Activated T-helper 1 cell treated with anti-CD3 and anti-CD28 coated beads, Interleukin-12 subunit alpha, Interleukin-12 subunit beta, Interleukin-2, Interleukin-4 antibody, amounts not matched to agents 30 ng/mL and 10 ng/mL and 1 ng/mL, durations not matched to agents 14 hours and 24 hours and 36 hours (primary cell): ENCODE measurements at regions of chr9 and their contacts with region 1.

Region 1: GRCh38 chr9:68949271-68950000 is 64.5 kb downstream of the PRKACG start:
- DNase-seq: no peak
- H3K4me3 Mint-ChIP-seq: peak overlapping the region; percentile 62
- H3K27ac Mint-ChIP-seq: peak overlapping the region; percentile 69
- H3K4me1 Mint-ChIP-seq: peaks cover 76% of the 10 kb centered on the region
- H3K27me3 Mint-ChIP-seq: no peaks in the 10 kb centered on the region

Region 2: DNA sequence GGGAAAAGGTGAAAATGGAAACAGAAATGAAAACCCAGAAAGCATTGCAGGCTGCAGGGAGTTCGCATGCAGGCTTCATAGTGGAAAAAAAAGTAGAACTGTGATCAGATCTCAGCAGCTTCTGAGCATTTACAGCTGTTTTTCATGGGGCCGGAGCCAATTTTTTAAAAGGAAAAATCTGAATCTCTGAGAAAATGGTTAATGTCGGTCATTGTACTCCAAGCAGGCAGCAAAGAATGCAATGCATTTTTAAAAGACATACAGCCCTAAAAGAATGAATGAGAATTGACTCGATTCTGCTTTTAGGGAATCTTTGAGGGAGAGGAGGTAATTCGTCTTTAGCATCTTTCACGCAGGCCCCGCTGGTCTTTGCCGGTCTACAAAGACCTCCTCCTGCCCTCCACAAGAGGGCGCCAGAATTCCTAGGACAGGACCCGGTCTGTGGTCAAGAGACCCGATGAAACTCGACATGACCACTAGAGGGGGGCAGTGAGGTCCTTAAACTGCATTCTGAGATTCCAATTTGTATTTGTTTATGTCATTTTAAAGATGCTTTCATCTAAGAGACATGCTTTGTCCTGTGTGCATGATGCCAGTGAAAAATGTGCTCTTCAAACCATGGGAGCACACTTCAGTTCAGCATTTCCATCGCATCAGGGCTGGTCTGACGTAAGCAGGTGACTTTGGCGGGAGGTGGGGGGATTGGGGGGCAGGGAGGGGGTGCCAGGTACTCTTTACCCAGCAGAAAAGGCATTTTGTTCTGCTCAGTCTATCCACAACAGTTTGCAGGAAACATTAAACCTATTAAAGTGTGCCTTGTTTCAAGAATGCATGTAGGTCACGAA is 365.0 kb before region 1 on chr9:
- intact Hi-C with region 1: loop called (anchors 1 kb)
- DNase-seq: peak; percentile 74
- H3K4me3 Mint-ChIP-seq: no peak overlapping the region
- H3K27ac Mint-ChIP-seq: no peak overlapping the region
- H3K4me1 Mint-ChIP-seq: peaks cover 11% of the 10 kb centered on the region
- H3K27me3 Mint-ChIP-seq: peaks cover 6% of the 10 kb centered on the region

Region 3: GRCh38 chr9:68704814-68705530 is 244.5 kb before region 1 on chr9 and contains the start of gene PIP5K1B:
- intact Hi-C with region 1: loop called (anchors 5 kb)
- DNase-seq: peak; percentile 44
- H3K4me3 Mint-ChIP-seq: peak within 1 kb of the TSS; percentile 85
- H3K27ac Mint-ChIP-seq: peak within 1 kb of the TSS; percentile 81
- H3K4me1 Mint-ChIP-seq: peaks cover 27% of the 10 kb centered on the region
- H3K27me3 Mint-ChIP-seq: peaks cover 57% of the 10 kb centered on the region
- total RNA-seq, gene PIP5K1B: 77.4 and 78.5 TPM in 2 replicates

Region 4: GRCh38 chr9:68802525-68803015 is 146.9 kb before region 1 on chr9:
- intact Hi-C with region 1: loop called (anchors 1 kb)
- DNase-seq: peak; percentile 31
- H3K4me3 Mint-ChIP-seq: no peak overlapping the region
- H3K27ac Mint-ChIP-seq: no peak overlapping the region
- H3K4me1 Mint-ChIP-seq: peaks cover 18% of the 10 kb centered on the region
- H3K27me3 Mint-ChIP-seq: peaks cover 3% of the 10 kb centered on the region

Region 5: DNA sequence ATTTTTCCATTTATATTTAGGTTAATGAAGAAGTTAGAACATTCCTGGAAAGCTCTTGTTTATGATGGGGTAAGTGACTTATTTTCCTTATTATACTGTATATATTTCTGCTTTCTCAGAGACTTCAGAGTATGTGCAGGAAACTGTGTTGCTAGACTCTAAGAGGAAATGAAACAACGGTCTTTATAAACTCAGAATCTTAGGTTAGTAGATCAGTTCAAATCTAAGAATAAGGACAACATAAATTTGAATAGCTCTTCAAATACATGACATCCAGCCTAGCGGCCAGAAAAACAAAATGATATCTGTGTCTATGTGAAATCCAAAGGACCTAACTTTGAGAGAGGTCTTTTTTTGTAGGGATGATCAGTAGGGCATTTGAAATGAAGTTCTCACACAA is 29.8 kb before region 1 on chr9:
- intact Hi-C with region 1: loop called (anchors 1 kb)
- DNase-seq: no peak
- H3K4me3 Mint-ChIP-seq: no peak overlapping the region
- H3K27ac Mint-ChIP-seq: no peak overlapping the region
- H3K4me1 Mint-ChIP-seq: peaks cover 45% of the 10 kb centered on the region
- H3K27me3 Mint-ChIP-seq: peaks cover 3% of the 10 kb centered on the region

Region 6: DNA sequence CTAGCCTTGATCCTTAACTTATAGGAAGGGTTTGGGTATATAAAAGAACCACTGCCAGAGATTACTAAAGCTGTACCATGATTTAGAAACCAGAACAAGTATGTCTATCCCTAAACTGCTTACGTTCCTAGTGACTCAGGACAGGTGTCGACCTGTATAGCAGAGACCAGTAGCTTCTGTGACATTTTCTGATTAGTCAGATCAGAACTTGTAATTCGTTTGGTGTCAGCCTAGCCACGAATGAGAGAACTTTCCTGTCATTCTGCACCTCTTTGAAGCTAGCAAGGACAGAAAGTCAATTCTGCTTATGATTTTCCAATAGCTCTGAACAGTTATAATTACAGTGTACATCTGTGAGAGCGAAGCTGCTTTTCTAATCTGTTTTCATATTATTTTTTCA is 25.0 kb after region 1 on chr9:
- intact Hi-C with region 1: loop called (anchors 1 kb)
- DNase-seq: peak; percentile 22
- H3K4me3 Mint-ChIP-seq: peak overlapping the region; percentile 60
- H3K27ac Mint-ChIP-seq: peak overlapping the region; percentile 87
- H3K4me1 Mint-ChIP-seq: peaks cover 69% of the 10 kb centered on the region
- H3K27me3 Mint-ChIP-seq: no peaks in the 10 kb centered on the region

Region 7: DNA sequence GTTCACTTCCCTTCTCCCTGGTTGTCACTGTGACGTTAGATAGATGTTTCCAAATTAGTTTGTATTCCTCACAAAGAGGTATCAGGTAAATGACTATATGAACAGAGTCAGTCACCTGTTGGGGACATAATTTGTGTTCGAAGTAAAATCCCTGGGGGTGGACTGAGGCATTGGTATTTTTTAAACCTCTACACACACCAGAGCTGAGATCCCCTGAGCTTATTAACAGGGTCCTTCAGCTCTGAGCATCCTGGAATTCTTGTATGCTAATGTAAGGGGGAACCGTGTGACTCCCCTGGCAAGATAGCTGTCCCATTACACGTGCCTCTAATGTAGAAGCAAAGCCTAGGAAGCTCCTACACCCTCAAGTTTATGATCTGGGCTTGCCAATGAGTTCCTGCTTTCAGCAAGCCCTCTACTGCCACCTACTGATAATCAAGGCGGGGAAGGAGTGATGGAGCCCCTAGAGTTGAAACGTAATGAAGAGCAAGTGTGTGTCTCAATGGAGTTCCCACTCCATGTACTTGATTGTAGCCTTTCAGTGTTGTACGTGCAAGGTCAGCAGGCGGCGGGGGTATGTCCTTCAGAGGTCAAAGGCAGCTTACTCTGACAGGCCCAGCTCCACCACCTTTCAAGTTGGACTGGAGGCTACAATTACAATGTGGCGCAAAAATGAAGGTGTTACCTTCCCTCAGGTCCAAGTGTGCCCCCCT is 50.1 kb after region 1 on chr9:
- intact Hi-C with region 1: loop called (anchors 1 kb)
- DNase-seq: peak; percentile 58
- H3K4me3 Mint-ChIP-seq: no peak overlapping the region
- H3K27ac Mint-ChIP-seq: peak overlapping the region; percentile 61
- H3K4me1 Mint-ChIP-seq: peaks cover 38% of the 10 kb centered on the region
- H3K27me3 Mint-ChIP-seq: peaks cover 2% of the 10 kb centered on the region